ENCODE measurements at regions of chr21 and their contacts with region 1.

Region 1: GRCh38 chr21:34986561-34987500 is 62.3 kb downstream of the RUNX1 start:
- DNase-seq: peak; percentile 90
- ATAC-seq: peak; percentile 54
- H3K4me3 Mint-ChIP-seq: peak overlapping the region; percentile 61
- H3K27ac Mint-ChIP-seq: peak overlapping the region; percentile 89
- H3K4me1 Mint-ChIP-seq: peaks cover 97% of the 10 kb centered on the region
- H3K27me3 Mint-ChIP-seq: no peaks in the 10 kb centered on the region

Region 2: GRCh38 chr21:34933609-34934335 is 53.1 kb before region 1 on chr21:
- CTCF ChIA-PET with region 1: interaction called, 16 read pairs
- POLR2A ChIA-PET with region 1: interaction called, 9 read pairs
- intact Hi-C with region 1: loop called in 1 of 2 experiments (anchors 1 kb)
- DNase-seq: peak; percentile 40
- ATAC-seq: peak; percentile 85
- H3K4me3 Mint-ChIP-seq: peak overlapping the region; percentile 68
- H3K27ac Mint-ChIP-seq: peak overlapping the region; percentile 96
- H3K4me1 Mint-ChIP-seq: peaks cover 84% of the 10 kb centered on the region
- H3K27me3 Mint-ChIP-seq: no peaks in the 10 kb centered on the region

Region 3: DNA sequence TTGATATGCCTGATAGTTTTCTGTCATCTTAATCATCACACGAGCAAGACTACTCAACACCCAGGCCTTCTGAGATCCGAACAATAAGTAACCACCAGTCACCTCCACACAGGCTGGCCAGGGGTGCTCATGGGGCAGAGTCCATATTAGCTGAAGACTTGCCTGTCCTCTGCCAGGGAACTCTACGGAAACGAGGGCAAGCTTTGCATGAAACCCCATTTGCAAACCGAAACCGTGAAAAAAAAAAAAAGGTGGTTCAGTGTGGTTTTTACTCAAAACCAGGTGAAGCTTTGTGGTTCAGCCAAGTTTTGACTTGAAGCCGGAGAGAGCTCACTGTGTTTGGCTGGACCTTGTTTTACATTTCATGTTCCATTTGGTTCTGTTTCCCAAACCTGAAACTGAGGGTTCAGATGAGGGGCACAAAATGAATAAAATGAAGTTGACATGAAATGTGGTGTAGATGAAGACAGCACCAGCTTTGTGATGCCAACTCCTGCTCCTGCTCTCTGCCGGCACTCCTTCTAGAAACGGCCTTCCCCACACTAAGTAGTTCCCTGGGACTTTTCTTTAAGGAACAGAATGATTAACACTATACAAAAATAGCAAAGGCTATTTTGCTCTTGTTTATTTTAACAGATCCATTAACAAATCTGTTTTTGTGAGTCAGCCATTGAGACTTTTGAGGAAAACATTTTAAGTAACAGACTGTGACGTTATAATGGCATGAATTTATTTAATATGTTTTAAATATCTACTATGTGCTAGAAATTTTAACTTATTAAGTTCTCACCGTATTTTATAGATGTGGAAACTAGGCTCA is 12.5 kb before region 1 on chr21:
- CTCF ChIA-PET with region 1: interaction called, 30 read pairs
- POLR2A ChIA-PET with region 1: interaction called, 31 read pairs
- intact Hi-C with region 1: loop called (anchors 1 kb)
- DNase-seq: peak; percentile 68
- ATAC-seq: peak; percentile 85
- H3K4me3 Mint-ChIP-seq: peak overlapping the region; percentile 65
- H3K27ac Mint-ChIP-seq: peak overlapping the region; percentile 72
- H3K4me1 Mint-ChIP-seq: peaks cover 84% of the 10 kb centered on the region
- H3K27me3 Mint-ChIP-seq: peaks cover 3% of the 10 kb centered on the region

Region 4: GRCh38 chr21:35020902-35021301 is 34.1 kb after region 1 on chr21:
- CTCF ChIA-PET with region 1: interaction called, 8 read pairs
- POLR2A ChIA-PET with region 1: interaction called, 21 read pairs
- intact Hi-C with region 1: loop called (anchors 1 kb)
- DNase-seq: peak; percentile 47
- ATAC-seq: peak; percentile 31
- H3K4me3 Mint-ChIP-seq: no peak overlapping the region
- H3K27ac Mint-ChIP-seq: peak overlapping the region; percentile 78
- H3K4me1 Mint-ChIP-seq: peaks cover 90% of the 10 kb centered on the region
- H3K27me3 Mint-ChIP-seq: no peaks in the 10 kb centered on the region

Region 5: DNA sequence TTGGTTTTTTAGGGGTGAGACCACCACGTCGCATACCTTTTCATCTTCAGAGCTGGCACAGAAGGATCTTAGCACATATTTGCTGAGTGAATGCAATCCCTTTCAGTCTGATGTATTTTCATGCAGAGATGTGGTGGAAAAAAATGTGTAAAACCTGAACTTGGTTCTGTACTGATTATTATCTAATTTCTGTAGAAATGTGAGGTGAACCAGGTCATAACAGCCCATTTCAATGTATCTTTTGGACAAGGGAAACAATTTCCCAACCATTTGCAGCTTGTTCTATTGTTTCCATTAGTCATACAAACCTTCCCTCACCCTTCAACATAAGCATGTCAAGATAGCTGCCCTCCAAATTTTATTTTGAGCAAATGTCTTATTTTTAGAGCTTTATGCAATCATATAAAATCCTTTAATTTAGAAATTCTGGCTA is 109.0 kb after region 1 on chr21:
- CTCF ChIA-PET with region 1: interaction called, 3 read pairs
- POLR2A ChIA-PET with region 1: no interaction called
- intact Hi-C with region 1: loop called in 1 of 2 experiments (anchors 1 kb)
- DNase-seq: peak; percentile 20
- ATAC-seq: peak; percentile 25
- H3K4me3 Mint-ChIP-seq: no peak overlapping the region
- H3K27ac Mint-ChIP-seq: peak overlapping the region; percentile 86
- H3K4me1 Mint-ChIP-seq: peaks cover 50% of the 10 kb centered on the region
- H3K27me3 Mint-ChIP-seq: peaks cover 2% of the 10 kb centered on the region

Region 6: DNA sequence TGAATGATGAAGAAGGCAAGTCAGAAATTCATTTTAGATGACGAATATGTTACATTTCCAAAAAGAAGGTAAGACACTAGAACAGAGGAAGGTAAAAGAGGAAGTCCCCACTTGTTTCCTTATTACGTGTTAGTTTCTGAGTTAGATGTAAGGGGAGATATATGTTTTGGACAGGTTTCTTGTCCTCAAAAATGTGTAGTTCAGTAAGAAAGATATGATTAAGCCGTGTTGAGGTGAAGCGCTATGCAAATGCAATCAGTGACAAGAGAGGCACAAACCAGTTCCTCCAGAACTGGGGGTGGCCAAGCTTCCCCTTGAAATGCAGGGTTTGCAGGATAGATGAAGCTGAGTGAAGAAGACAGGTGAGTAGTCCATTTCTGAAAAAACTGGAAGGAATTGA is 355.6 kb after region 1 on chr21:
- CTCF ChIA-PET with region 1: no interaction called
- POLR2A ChIA-PET with region 1: no interaction called
- intact Hi-C with region 1: loop called (anchors 1 to 2 kb)
- DNase-seq: peak; percentile 55
- ATAC-seq: peak; percentile 78
- H3K4me3 Mint-ChIP-seq: peak overlapping the region; percentile 59
- H3K27ac Mint-ChIP-seq: peak overlapping the region; percentile 94
- H3K4me1 Mint-ChIP-seq: peaks cover 39% of the 10 kb centered on the region
- H3K27me3 Mint-ChIP-seq: peaks cover 1% of the 10 kb centered on the region